Cardiac septum (tissue), 1 donor: ENCODE measurements at regions of chr2 and their contacts with region 1.

Region 1: DNA sequence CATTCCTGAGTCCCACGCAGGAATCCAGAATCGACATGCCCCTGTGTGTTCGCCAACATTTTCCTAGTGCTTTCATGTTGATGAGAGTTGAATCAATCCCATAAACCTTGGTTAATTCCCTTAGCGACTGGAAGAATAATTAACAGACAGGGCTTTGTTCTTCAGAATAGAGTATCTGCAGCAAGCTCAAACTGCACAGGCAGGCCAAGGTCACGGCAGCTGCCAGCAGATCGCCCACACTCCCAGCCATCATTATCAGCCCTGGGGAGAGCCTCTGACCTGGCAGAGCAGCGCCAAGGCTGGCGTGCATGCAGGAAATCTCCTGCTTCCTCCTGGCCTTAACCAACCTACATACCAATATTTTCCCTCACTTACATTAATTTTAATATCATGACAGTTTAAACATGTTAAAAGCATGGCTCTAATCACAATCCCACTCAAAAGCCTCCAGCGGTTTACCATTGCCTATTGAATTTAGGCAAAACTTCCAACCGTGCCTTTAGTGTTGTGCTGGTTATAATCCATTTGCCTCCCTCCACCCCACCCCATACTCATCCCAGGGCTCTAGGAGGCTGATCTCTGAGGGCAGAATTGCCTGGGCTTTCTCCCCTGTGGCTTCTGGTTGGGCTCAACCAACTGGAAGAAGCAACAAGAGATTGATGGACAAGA is 46.8 kb upstream of the NCK2 start:
- DNase-seq: peak; percentile 80

Region 2: DNA sequence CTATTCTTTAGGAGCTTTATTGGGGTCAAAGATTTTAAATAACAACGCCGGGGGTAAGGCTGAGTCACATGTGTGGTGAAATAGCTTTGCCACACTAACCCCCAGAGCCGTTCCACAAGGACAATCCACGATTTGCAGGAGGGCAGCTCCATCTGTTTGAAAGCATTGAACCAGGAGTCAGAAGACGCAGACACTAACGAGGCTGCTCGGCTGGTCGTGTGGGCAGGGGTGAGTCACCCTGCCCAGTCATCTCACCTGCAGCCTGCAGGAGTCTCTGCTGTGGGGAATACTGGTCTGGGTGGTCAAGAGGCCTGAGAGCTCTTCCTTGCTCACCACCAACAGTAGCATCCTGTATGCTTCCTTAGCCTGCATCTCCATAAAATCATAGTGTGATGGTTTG is 102.4 kb before region 1 on chr2:
- intact Hi-C with region 1: loop called (anchors 5 kb)
- DNase-seq: no peak

Region 3: DNA sequence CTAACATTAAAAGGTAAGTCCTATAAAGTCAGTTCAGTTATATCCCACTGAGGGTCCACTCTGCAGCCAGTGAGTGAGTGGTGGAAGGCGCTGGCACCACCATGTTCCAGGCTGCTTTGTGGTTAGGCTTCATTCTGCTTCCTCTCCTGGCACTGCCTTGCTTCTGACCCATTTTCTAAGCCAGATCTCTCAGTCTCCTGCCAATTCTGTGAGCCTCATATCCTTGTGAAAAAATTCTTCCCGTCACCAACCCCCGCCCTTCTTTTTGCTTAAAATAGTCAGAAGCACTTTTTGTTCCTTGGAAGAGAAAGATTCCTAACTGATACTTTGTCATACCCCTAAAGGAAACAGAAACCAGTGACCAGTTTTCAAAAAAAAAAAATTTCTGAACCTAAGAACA is 93.0 kb before region 1 on chr2:
- intact Hi-C with region 1: loop called (anchors 5 kb)
- DNase-seq: no peak

Region 4: DNA sequence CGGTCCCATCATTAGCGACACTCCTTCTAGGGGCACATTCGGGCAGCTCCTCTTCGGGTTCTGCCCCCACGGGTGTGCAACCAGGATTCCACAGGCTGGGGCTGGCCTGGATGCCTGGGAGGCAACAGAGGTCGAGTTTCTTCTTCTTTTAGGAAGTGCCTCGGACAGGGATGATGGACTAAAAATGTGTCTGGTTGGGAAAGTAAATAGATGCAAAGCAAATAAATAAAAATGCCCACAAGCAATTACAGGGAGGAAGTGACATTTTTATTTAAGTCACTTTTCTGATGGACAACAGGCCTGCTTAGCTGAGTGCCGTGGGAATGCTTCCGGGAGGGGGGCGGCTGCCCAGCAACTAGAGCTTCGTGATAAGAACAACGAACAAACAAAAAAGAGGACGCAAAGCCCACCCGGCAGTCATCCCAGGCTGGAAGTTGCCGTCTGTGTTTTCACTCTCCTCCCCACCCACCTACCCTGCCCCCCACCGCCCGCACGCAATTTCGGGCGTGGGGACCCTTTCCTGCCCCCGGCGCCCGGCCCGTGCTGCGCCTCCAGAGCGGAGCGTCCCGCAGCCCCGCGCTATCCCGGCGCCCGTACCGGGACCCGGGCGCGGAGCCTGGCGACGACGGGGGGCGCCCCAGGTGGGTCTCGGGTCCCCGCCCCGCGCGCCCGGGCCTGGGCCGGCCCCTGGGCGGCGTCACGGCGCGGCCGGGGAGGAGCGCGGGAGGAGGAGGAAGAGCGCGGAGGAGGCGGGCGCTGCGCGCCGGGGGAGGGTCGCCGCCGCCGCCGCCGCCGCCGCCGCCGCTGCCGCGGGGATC is 46.4 kb after region 1 on chr2:
- intact Hi-C with region 1: no loop called
- DNase-seq: peak; percentile 89